Activated B cell treated with CpG ODN at 0.5 μM for 24 hours (primary cell): ENCODE measurements at regions of chr4 and their contacts with region 1.

Region 1: DNA sequence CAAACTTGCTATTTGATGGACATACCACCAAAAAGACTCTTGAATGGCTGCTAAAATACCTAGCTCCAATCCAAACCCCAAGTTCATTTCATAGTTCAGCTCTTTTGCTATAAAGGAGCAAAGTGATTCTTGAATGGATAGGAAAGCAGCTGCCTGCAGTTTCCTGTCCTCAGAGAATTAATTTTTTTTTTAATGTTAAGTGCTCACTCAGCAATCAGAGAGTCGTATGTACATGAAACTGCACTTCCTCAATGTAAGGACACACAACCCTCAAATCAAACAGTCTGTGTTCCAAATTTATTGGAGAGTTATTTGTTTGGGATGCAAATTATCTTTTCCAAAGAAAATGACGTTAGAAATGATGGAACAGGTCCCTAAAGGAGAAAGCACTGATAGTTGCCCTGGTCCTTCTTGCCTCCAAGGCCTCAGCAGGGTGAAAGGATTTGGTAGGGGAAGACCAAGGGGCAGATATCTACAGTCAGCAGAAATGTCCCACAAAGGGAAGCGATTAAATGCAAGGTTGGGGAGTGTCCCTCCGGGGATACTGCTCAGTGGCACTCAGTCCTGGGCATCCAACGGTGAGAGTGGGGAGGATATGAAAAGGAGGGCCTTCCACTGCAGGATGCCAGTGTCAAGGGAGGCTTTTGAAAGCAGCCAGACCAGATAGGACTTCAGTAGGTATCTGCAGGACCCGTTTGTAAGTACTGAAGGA is 67.2 kb upstream of the RASGEF1B start:
- DNase-seq: no peak
- ATAC-seq: no peak
- H3K4me3 Mint-ChIP-seq: no peak overlapping the region
- H3K27ac Mint-ChIP-seq: no peak overlapping the region
- H3K4me1 Mint-ChIP-seq: peaks cover 13% of the 10 kb centered on the region
- H3K27me3 Mint-ChIP-seq: no peaks in the 10 kb centered on the region
- CTCF ChIP-seq: no peak

Region 2: GRCh38 chr4:81523672-81524327 is 15.1 kb before region 1 on chr4:
- CTCF ChIA-PET with region 1: no interaction called
- POLR2A ChIA-PET with region 1: interaction called, 3 read pairs
- intact Hi-C with region 1: loop called (anchors 2 kb)
- DNase-seq: no peak
- ATAC-seq: peak; percentile 49
- H3K4me3 Mint-ChIP-seq: no peak overlapping the region
- H3K27ac Mint-ChIP-seq: no peak overlapping the region
- H3K4me1 Mint-ChIP-seq: peaks cover 24% of the 10 kb centered on the region
- H3K27me3 Mint-ChIP-seq: no peaks in the 10 kb centered on the region
- CTCF ChIP-seq: no peak

Region 3: GRCh38 chr4:81549984-81550383 is 11.1 kb after region 1 on chr4:
- CTCF ChIA-PET with region 1: no interaction called
- POLR2A ChIA-PET with region 1: no interaction called
- intact Hi-C with region 1: loop called (anchors 1 kb)
- DNase-seq: no peak
- ATAC-seq: no peak
- H3K4me3 Mint-ChIP-seq: no peak overlapping the region
- H3K27ac Mint-ChIP-seq: no peak overlapping the region
- H3K4me1 Mint-ChIP-seq: peaks cover 17% of the 10 kb centered on the region
- H3K27me3 Mint-ChIP-seq: no peaks in the 10 kb centered on the region
- CTCF ChIP-seq: no peak